PC-9 (cell line): ENCODE measurements at regions of chr2 and their contacts with region 1.

Region 1: GRCh38 chr2:165833158-165833557 is 39.1 kb upstream of the GALNT3 start:
- DNase-seq: peak; percentile 52 to 81
- H3K4me3 ChIP-seq: no peak overlapping the region
- H3K27ac ChIP-seq: peak overlapping the region; percentile 31; the same call in 1 of the 2 replicates
- H3K4me1 ChIP-seq: peaks cover 15% of the 10 kb centered on the region
- H3K27me3 ChIP-seq: no peaks in the 10 kb centered on the region
- CTCF ChIP-seq: no peak

Region 2: DNA sequence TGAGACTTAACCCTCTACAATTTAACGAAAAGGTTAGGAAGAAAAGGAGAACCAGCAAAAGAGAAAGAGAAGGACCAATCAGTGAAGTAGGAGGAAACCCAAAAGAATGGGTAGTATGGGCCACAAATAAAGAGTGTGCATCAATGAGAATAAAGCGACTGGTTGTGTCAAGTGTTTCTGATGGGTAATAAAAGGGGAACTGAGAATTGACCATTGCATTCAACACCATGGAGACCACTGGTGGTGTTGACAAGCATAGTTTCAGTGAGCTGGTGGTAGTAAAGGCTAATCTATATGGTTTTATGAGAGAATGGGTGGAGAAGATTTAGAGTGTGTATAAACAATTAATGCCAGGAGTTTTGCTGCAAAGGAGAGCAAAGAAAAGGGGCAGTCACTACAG is 288.3 kb before region 1 on chr2:
- CTCF ChIA-PET with region 1: no interaction called
- POLR2A ChIA-PET with region 1: no interaction called
- intact Hi-C with region 1: no loop called
- DNase-seq: no peak
- H3K4me3 ChIP-seq: no peak overlapping the region
- H3K27ac ChIP-seq: no peak overlapping the region
- H3K4me1 ChIP-seq: no peaks in the 10 kb centered on the region
- H3K27me3 ChIP-seq: no peaks in the 10 kb centered on the region
- CTCF ChIP-seq: no peak

Region 3: GRCh38 chr2:165634855-165635254 is 198.3 kb before region 1 on chr2:
- CTCF ChIA-PET with region 1: no interaction called
- POLR2A ChIA-PET with region 1: no interaction called
- intact Hi-C with region 1: no loop called
- DNase-seq: no peak
- H3K4me3 ChIP-seq: no peak overlapping the region
- H3K27ac ChIP-seq: no peak overlapping the region
- H3K4me1 ChIP-seq: no peaks in the 10 kb centered on the region
- H3K27me3 ChIP-seq: no peaks in the 10 kb centered on the region
- CTCF ChIP-seq: no peak

Region 4: GRCh38 chr2:165794536-165794928 is 38.6 kb before region 1 on chr2:
- CTCF ChIA-PET with region 1: no interaction called
- POLR2A ChIA-PET with region 1: no interaction called
- intact Hi-C with region 1: loop called (anchors 2 kb)
- DNase-seq: peak; percentile 41 to 52
- H3K4me3 ChIP-seq: peak overlapping the region; percentile 90
- H3K27ac ChIP-seq: peak overlapping the region; percentile 98
- H3K4me1 ChIP-seq: peaks cover 33% of the 10 kb centered on the region
- H3K27me3 ChIP-seq: no peaks in the 10 kb centered on the region
- CTCF ChIP-seq: no peak